ENCODE measurements at regions of chr18 and their contacts with region 1.

Region 1: DNA sequence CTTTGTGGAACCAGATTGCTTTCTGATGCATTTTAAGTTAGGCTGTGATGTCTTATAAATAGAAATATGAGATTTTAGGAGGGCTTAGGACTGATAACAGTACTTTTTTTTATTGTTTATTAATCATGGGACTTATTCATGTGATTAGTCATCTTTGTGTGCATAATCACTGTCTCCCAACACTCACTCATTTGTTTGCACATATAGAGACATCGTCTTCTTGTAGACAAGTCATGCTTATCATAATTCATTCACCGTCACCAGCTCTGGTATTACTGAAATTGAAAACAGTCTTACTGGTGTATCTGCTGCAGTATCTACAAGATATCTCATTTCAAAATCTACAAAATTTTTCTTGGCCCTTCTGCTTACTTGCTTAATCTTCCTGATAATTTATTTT is 45.8 kb downstream of the WDR7 start:
- DNase-seq: no peak
- ATAC-seq: no peak
- H3K4me3 ChIP-seq: no peak overlapping the region
- H3K4me3 Mint-ChIP-seq: no peak overlapping the region
- H3K27ac ChIP-seq: no peak overlapping the region
- H3K27ac Mint-ChIP-seq: no peak overlapping the region
- H3K4me1 ChIP-seq: no peaks in the 10 kb centered on the region
- H3K4me1 Mint-ChIP-seq: no peaks in the 10 kb centered on the region
- H3K27me3 ChIP-seq: no peaks in the 10 kb centered on the region
- H3K27me3 Mint-ChIP-seq: no peaks in the 10 kb centered on the region

Region 2: DNA sequence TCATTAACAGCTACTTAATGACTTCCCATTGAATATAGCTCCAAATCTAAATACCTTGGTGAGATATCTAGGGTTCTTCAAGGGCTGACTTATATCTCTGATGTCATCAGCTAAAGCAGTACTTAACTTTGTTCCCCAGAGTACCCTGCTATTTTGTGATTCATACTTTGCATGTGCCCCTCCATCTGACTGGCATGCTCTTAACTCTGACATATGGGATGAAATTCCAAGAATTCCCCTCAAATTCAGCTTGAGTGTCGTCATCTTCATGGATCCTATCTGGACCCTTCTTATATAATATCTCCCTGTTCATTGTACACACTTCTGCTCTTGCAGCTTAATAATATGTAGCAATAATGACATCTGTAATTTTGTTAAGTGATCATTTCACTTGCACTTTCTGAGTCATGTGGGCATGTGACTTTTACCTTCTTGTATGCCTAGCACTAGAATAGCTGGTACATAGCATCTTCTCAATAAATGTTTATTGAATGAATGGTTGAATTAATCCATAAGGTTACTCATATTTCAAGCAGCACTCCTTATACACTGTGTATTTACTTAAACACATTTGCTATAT is 127.1 kb after region 1 on chr18:
- CTCF ChIA-PET with region 1: no interaction called
- POLR2A ChIA-PET with region 1: interaction called in 1 of 2 experiments, 16 read pairs
- DNase-seq: no peak
- ATAC-seq: no peak
- H3K4me3 ChIP-seq: no peak overlapping the region
- H3K4me3 Mint-ChIP-seq: no peak overlapping the region
- H3K27ac ChIP-seq: no peak overlapping the region
- H3K27ac Mint-ChIP-seq: no peak overlapping the region
- H3K4me1 ChIP-seq: peaks cover 2 to 8% of the 10 kb centered on the region in 2 experiments
- H3K4me1 Mint-ChIP-seq: peaks cover 18 to 20% (median 19%) of the 10 kb centered on the region in 3 donors
- H3K27me3 ChIP-seq: no peaks in the 10 kb centered on the region
- H3K27me3 Mint-ChIP-seq: no peaks in the 10 kb centered on the region

Region 3: GRCh38 chr18:57029761-57030160 is 332.8 kb after region 1 on chr18:
- CTCF ChIA-PET with region 1: interaction called in 1 of 2 experiments, 11 read pairs
- POLR2A ChIA-PET with region 1: no interaction called
- DNase-seq: no peak
- ATAC-seq: no peak
- H3K4me3 ChIP-seq: no peak overlapping the region
- H3K4me3 Mint-ChIP-seq: no peak overlapping the region
- H3K27ac ChIP-seq: no peak overlapping the region
- H3K27ac Mint-ChIP-seq: no peak overlapping the region
- H3K4me1 ChIP-seq: no peaks in the 10 kb centered on the region
- H3K4me1 Mint-ChIP-seq: no peaks in the 10 kb centered on the region
- H3K27me3 ChIP-seq: no peaks in the 10 kb centered on the region
- H3K27me3 Mint-ChIP-seq: no peaks in the 10 kb centered on the region